ENCODE measurements at regions of chr1 and their contacts with region 1.

Region 1: DNA sequence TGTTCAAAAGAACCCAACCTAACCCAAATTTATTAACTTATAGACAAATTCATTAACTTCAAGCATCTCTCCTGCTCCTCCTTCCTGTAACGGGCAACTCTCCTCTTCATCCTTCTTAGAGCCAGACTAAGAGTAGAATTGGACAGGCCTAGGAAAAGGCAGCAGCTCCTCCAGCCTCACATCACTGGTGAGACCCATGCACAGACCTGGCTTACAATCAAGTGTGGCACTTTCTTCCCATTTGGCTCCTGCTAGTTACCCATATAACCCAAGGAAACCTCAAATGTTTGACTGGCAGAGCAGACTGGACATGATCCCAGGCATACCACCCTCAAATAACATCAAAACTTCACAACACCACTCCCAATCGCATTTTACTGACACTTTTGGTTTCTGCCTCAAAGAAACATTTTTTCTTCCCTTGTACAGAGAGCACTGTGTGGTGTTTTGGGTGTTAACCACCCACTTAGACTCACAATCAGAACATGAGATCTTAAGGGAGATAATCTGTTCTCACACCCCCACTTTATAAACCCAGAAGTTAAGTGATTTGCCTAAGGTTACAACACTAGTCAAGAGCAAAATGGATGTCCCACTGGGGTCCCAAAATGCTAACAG is 101.4 kb downstream of the SIPA1L2 start:
- DNase-seq: no peak
- ATAC-seq: no peak
- H3K4me3 ChIP-seq: no peak overlapping the region
- H3K27ac ChIP-seq: peak overlapping the region; percentile 81
- H3K4me1 ChIP-seq: peaks cover 29% of the 10 kb centered on the region
- H3K27me3 ChIP-seq: no peaks in the 10 kb centered on the region
- CTCF ChIP-seq: no peak

Region 2: DNA sequence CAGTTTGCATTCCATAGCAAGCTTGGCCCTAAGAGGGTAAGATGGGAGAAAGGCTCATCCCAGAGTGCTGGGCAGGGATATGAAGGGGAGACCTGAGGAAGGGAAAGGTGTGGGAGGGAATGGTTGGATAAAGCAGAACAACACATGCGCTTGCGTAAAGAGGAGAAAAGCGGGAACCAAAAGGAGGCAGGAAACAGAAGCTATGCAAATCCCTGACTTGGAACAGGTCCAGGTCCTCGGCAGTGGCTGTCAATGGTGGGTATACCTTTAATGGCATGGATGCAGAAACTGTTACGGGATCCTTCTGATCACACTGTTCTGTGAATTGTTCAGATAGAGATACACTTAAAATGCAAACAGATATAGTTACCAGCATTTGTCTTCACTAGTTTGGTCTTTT is 354.3 kb before region 1 on chr1:
- CTCF ChIA-PET with region 1: no interaction called
- POLR2A ChIA-PET with region 1: no interaction called
- intact Hi-C with region 1: loop called (anchors 5 kb)
- DNase-seq: no peak
- ATAC-seq: no peak
- H3K4me3 ChIP-seq: no peak overlapping the region
- H3K27ac ChIP-seq: no peak overlapping the region
- H3K4me1 ChIP-seq: no peaks in the 10 kb centered on the region
- H3K27me3 ChIP-seq: no peaks in the 10 kb centered on the region
- CTCF ChIP-seq: no peak

Region 3: GRCh38 chr1:232307296-232308017 is 221.1 kb before region 1 on chr1:
- CTCF ChIA-PET with region 1: interaction called, 10 read pairs
- POLR2A ChIA-PET with region 1: no interaction called
- intact Hi-C with region 1: no loop called
- DNase-seq: no peak
- ATAC-seq: no peak
- H3K4me3 ChIP-seq: no peak overlapping the region
- H3K27ac ChIP-seq: no peak overlapping the region
- H3K4me1 ChIP-seq: peaks cover 14% of the 10 kb centered on the region; the same call in 1 of the 2 replicates
- H3K27me3 ChIP-seq: no peaks in the 10 kb centered on the region
- CTCF ChIP-seq: no peak

Region 4: GRCh38 chr1:232568331-232568852 is 39.8 kb after region 1 on chr1:
- CTCF ChIA-PET with region 1: no interaction called
- POLR2A ChIA-PET with region 1: no interaction called
- intact Hi-C with region 1: no loop called
- DNase-seq: peak; percentile 35
- ATAC-seq: peak; percentile 54
- H3K4me3 ChIP-seq: no peak overlapping the region
- H3K27ac ChIP-seq: no peak overlapping the region
- H3K4me1 ChIP-seq: peaks cover 15% of the 10 kb centered on the region
- H3K27me3 ChIP-seq: no peaks in the 10 kb centered on the region
- CTCF ChIP-seq: no peak

Measured in PC-3 (cell line).